ENCODE measurements at regions of chr10 and their contacts with region 1.

Region 1: GRCh38 chr10:122298598-122299301 is 27.7 kb downstream of the BTBD16 start:
- DNase-seq: peak; percentile 81
- ATAC-seq: peak; percentile 96
- H3K4me3 Mint-ChIP-seq: no peak overlapping the region
- H3K27ac Mint-ChIP-seq: no peak overlapping the region
- H3K4me1 Mint-ChIP-seq: peaks cover 6% of the 10 kb centered on the region
- H3K27me3 Mint-ChIP-seq: peaks cover 2% of the 10 kb centered on the region
- CTCF ChIP-seq: peak; percentile 94

Region 2: DNA sequence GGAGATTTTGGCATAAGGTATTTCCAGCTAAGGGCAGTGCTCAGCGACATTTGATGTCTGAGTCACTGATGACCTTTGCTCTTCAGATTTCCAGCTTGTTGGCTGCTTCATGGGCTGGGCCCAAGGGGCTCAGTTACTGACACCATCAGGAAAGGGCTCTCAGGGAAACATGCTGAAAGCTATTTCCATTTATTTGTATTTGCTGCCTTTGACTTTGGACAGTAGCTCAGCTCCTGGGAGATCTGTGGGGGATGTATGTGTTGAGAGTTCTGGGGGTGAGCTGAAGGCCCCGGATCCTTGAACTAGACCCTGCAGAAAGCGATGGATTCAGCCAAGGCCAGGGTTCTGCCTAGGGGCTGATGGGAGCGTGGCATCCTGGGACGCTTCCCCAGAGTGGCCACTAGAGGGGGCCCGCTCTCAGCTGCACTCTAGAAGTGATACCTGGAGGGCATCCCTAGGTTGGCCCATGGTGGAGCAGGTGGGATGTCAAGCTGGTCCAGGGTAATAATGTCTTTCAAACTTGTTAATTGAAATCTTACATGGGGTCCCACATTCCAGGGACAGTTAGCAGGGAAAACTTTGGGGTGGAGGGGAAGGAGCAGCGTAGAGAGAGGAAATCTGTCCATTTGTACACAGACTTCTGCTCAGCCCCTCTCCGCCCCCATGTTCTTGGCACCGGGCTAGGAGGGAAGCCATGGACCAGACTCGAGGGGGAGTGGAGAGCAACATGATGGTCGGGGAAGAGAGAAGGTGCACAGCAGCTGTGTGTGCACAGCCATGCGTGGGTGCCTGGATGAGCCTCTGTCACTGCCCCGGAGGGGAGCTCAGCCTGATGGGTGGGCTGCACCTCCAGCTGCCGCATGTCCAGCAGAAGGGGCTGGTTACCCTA is 30.7 kb before region 1 on chr10:
- CTCF ChIA-PET with region 1: interaction called, 12 read pairs
- POLR2A ChIA-PET with region 1: no interaction called
- intact Hi-C with region 1: no loop called
- DNase-seq: peak; percentile 61
- ATAC-seq: peak; percentile 87
- H3K4me3 Mint-ChIP-seq: no peak overlapping the region
- H3K27ac Mint-ChIP-seq: no peak overlapping the region
- H3K4me1 Mint-ChIP-seq: no peaks in the 10 kb centered on the region
- H3K27me3 Mint-ChIP-seq: peaks cover 10% of the 10 kb centered on the region
- CTCF ChIP-seq: peak; percentile 82

Region 3: DNA sequence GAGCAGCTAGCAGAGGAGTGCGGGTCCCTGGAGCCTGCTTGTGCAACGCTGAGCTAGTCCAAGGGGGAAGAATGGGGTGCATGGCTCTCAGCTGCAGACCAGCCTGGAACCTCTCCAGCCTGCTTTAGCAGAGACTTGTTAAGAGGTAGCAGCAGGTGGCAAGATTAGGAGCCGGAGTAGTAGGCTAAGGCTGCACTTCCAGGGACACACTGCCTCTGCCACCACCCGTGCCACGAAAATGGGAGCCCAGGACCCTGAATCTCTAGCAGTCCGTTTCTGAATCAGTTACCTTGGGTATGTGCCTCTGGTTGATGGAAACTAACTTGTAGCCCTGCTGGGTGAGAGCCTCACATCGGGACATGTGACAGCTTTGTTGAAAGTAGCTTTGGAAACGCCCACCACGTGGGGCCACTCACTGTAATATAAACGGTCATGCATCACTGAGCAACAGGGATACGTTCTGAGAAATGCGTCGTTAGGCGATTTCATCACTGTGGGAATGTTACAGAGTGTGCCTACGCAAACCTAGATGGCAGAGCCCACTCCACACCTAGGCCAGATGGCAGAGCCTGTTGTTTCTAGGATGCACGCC is 188.5 kb after region 1 on chr10:
- CTCF ChIA-PET with region 1: no interaction called
- POLR2A ChIA-PET with region 1: no interaction called
- intact Hi-C with region 1: no loop called
- DNase-seq: no peak
- ATAC-seq: no peak
- H3K4me3 Mint-ChIP-seq: no peak overlapping the region
- H3K27ac Mint-ChIP-seq: no peak overlapping the region
- H3K4me1 Mint-ChIP-seq: peaks cover 10% of the 10 kb centered on the region
- H3K27me3 Mint-ChIP-seq: peaks cover 2% of the 10 kb centered on the region
- CTCF ChIP-seq: no peak

Region 4: GRCh38 chr10:122557516-122557915 is 258.8 kb after region 1 on chr10:
- CTCF ChIA-PET with region 1: interaction called, 10 read pairs
- POLR2A ChIA-PET with region 1: no interaction called
- intact Hi-C with region 1: no loop called
- DNase-seq: no peak
- ATAC-seq: no peak
- H3K4me3 Mint-ChIP-seq: no peak overlapping the region
- H3K27ac Mint-ChIP-seq: no peak overlapping the region
- H3K4me1 Mint-ChIP-seq: peaks cover 24% of the 10 kb centered on the region
- H3K27me3 Mint-ChIP-seq: peaks cover 10% of the 10 kb centered on the region
- CTCF ChIP-seq: no peak

Region 5: DNA sequence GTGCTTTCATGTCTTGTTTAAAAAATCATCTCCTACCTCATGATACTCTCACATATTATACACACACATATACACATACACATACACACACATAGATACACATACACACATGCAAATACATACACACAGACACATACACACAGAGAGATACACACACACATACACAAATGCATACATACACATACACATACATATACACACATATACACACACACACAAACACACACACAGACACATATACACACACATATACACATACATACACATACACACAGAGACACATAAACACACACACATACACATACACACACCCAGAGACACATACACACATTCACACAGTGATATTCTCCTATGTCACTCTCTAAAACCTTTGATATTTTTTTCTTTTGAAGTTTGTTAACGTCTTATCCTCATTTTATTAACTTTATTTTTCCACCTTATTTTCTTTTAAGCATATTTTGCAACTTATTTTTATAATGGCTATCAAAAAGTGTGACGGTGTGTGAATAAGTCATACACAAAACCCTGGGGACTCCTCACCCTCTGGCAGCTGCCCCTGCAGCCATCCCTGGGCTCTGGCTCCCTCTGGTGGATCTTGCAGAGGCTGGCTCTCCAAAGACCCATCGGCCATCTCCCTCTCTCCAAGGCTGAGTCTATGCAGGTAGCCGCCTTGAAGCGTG is 404.8 kb after region 1 on chr10:
- CTCF ChIA-PET with region 1: interaction called, 4 read pairs
- POLR2A ChIA-PET with region 1: no interaction called
- intact Hi-C with region 1: loop called (anchors 5 kb)
- DNase-seq: peak; percentile 69
- ATAC-seq: peak; percentile 66
- H3K4me3 Mint-ChIP-seq: no peak overlapping the region
- H3K27ac Mint-ChIP-seq: no peak overlapping the region
- H3K4me1 Mint-ChIP-seq: no peaks in the 10 kb centered on the region
- H3K27me3 Mint-ChIP-seq: peaks cover 7% of the 10 kb centered on the region
- CTCF ChIP-seq: peak; percentile 83

Measured in activated CD8-positive, alpha-beta T cell treated with anti-CD3 and anti-CD28 coated beads for 36 hours (primary cell).